ENCODE measurements at regions of chr20 and their contacts with region 1.

Region 1: GRCh38 chr20:49541733-49542513 is 26.0 kb downstream of the PTGIS start:
- H3K4me3 Mint-ChIP-seq: no peak overlapping the region
- H3K27ac Mint-ChIP-seq: no peak overlapping the region
- H3K4me1 Mint-ChIP-seq: no peaks in the 10 kb centered on the region
- H3K27me3 Mint-ChIP-seq: peaks cover 12% of the 10 kb centered on the region

Region 2: GRCh38 chr20:48733296-48733887 is 808.5 kb before region 1 on chr20:
- intact Hi-C with region 1: no loop called
- H3K4me3 Mint-ChIP-seq: no peak overlapping the region
- H3K27ac Mint-ChIP-seq: no peak overlapping the region
- H3K4me1 Mint-ChIP-seq: peaks cover 83% of the 10 kb centered on the region
- H3K27me3 Mint-ChIP-seq: no peaks in the 10 kb centered on the region

Region 3: DNA sequence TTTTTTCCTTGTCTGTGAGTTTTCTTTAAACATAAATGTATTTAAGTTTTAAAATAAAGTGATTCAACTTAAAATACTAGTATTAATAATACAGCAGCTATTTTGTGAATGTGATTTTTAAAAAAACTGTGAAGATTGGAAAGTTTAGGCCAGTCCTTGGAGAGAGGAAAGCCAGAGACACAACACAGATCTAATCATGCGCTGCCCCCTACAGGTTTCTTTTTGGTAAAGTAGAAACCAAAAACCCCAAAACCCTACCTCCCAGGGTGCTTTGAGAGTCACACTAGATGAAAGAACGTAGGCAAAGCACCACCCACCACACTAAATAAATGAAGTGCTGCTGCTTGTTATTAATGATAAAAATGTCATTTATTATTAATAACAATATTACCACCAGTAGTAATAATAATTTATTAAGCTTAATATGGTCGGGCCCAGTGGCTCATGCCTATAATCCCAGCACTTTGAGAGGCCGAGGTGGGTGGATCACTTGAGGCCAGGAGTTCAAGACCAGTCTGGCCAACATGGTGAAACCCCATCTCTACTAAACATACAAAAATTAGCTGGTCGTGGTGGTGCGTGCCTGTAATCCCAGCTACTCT is 304.4 kb after region 1 on chr20:
- intact Hi-C with region 1: loop called (anchors 2 kb)
- H3K4me3 Mint-ChIP-seq: no peak overlapping the region
- H3K27ac Mint-ChIP-seq: no peak overlapping the region
- H3K4me1 Mint-ChIP-seq: peaks cover 6% of the 10 kb centered on the region
- H3K27me3 Mint-ChIP-seq: no peaks in the 10 kb centered on the region

Measured in dendritic cell treated with granulocyte-macrophage colony-stimulating factor and Interleukin-4, amounts not matched to agents 40 ng/mL and 50 ng/mL, for 4 days (primary cell).